Aorta (tissue), 5 donors: ENCODE measurements at regions of chr11 and their contacts with region 1.

Region 1: DNA sequence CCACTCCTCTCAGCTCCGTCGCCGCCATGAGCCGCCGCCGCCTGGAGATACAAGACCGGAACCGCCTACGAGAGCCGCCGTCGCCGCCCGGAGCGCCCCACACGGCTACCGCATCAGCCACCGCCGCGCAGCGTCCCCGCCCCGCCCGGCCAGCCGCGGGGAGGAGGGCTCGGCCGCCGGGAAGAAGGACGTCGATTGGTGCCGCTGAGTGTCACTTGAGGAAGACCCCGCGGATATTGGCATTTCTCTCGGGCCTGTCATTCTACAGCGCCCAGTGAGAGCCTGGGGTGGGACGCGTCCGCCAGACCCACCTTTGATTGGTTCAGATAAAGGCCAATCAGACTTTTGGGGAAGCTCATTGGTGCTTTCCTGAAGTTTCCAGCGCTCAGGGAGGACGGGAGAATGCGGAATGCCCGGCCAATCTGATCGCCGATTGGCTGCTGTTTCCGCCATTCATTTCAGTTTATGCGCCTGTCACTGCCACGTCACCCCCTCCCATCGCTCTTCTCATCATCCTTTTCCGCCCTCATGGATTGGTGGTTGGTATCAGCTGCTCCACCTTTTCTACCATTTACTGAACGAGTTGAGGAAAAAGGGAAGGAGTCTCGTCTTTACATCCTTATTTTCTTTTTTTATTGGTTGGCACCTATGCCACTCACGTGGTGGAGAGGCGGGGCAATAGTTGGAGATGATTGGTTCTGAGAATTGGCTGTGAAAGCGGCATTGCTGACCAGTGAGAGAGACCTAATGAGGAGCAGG is at the start of gene OSBP:
- DNase-seq: peak; percentile 99 to 100
- ATAC-seq: peak; percentile 97
- H3K4me3 ChIP-seq: peak within 1 kb of the TSS; percentile 58 to 68
- H3K27ac ChIP-seq: peak within 1 kb of the TSS; percentile 89 to 93
- H3K4me1 ChIP-seq: peaks cover 1 to 3% of the 10 kb centered on the region in 2 donors
- H3K27me3 ChIP-seq: no peaks in the 10 kb centered on the region
- total RNA-seq, gene OSBP: 40.4 to 42.4 TPM

Region 2: DNA sequence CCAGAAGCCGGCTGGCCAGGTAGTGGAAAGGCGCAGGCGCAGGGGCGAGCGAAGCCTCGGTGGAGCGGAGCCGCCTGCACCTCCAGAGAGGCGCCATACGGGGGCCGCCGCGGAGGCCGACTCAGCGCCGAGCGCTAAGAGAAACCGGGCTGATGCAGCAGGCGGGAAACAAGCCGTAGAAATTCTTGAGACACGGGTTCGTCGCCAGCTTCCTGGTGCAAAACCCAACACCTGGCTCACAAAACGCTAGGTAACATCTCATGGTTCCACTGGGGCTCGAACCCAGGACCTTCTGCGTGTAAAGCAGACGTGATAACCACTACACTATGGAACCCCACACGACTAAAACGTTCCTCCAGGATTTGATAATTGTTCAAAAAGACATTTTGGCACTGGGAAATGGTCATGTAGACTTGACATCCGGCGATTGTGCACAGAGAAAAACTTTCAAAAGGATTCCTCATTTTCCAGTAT is 65.4 kb before region 1 on chr11:
- intact Hi-C with region 1: loop called in 1 of 2 experiments (anchors 5 kb)
- DNase-seq: peak; percentile 81 to 91
- ATAC-seq: peak; percentile 91
- H3K4me3 ChIP-seq: peak overlapping the region; percentile 83 to 93
- H3K27ac ChIP-seq: peak overlapping the region in 1 of 2 donors; percentile 77
- H3K4me1 ChIP-seq: no peaks in the 10 kb centered on the region
- H3K27me3 ChIP-seq: no peaks in the 10 kb centered on the region

Region 3: GRCh38 chr11:59776210-59777066 is 160.6 kb after region 1 on chr11:
- intact Hi-C with region 1: no loop called
- DNase-seq: no peak
- ATAC-seq: no peak
- H3K4me3 ChIP-seq: no peak overlapping the region
- H3K27ac ChIP-seq: no peak overlapping the region
- H3K4me1 ChIP-seq: peaks cover 0 to 11% of the 10 kb centered on the region in 2 donors
- H3K27me3 ChIP-seq: no peaks in the 10 kb centered on the region